ENCODE measurements at regions of chr17 and their contacts with region 1.

Region 1: GRCh38 chr17:61325382-61326073 is 74.1 kb upstream of the TBX2 start:
- DNase-seq: no peak
- H3K4me3 ChIP-seq: no peak overlapping the region
- H3K27ac ChIP-seq: no peak overlapping the region
- H3K4me1 ChIP-seq: no peaks in the 10 kb centered on the region
- H3K27me3 ChIP-seq: peaks cover 2% of the 10 kb centered on the region
- CTCF ChIP-seq: no peak

Region 2: DNA sequence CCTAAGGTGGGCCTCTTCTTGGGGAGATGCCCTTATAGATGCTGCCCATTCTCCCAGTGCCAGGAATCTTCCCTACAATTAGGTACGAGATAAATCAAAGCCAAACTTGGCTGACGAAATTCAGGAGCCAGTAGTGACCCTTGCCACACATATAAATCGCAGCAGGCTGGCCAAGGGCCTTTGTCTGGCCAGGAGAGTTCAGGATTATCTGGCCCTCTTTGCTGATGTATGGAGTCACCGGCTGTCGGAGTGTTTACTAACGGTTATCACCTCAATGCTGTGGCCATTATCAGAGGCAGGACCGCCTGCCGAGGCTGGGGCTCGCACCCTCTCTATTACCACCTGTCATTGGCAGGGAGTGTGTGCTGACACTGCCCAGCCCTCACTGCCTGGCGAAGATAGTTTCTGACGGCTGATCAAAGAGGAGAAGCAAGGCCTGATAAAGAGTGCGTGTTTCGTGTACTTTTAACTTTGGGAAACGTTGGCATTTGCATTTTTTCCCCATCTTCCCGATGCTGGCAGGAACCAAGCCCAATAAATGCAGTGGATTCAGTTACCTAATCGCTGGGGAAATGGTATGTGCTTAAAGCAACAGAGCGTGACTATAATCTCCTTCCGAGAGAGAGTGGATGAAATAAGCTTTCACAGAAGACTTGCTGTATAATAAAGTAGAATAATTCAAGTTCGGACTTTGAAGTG is 41.3 kb after region 1 on chr17:
- CTCF ChIA-PET with region 1: no interaction called
- dilution Hi-C with region 1: loop called (anchors 5 kb)
- in situ Hi-C with region 1: no loop called
- intact Hi-C with region 1: no loop called
- DNase-seq: no peak
- H3K4me3 ChIP-seq: no peak overlapping the region
- H3K27ac ChIP-seq: no peak overlapping the region
- H3K4me1 ChIP-seq: no peaks in the 10 kb centered on the region
- H3K27me3 ChIP-seq: no peaks in the 10 kb centered on the region
- CTCF ChIP-seq: no peak

Region 3: GRCh38 chr17:61379457-61380216 is 54.1 kb after region 1 on chr17:
- CTCF ChIA-PET with region 1: no interaction called
- dilution Hi-C with region 1: no loop called
- in situ Hi-C with region 1: no loop called
- intact Hi-C with region 1: no loop called
- DNase-seq: no peak
- H3K4me3 ChIP-seq: no peak overlapping the region
- H3K27ac ChIP-seq: no peak overlapping the region
- H3K4me1 ChIP-seq: no peaks in the 10 kb centered on the region
- H3K27me3 ChIP-seq: no peaks in the 10 kb centered on the region
- CTCF ChIP-seq: no peak

Region 4: GRCh38 chr17:61416540-61417363 is 91.2 kb after region 1 on chr17:
- CTCF ChIA-PET with region 1: no interaction called
- dilution Hi-C with region 1: no loop called
- in situ Hi-C with region 1: no loop called
- intact Hi-C with region 1: no loop called
- DNase-seq: peak; percentile 50
- H3K4me3 ChIP-seq: no peak overlapping the region
- H3K27ac ChIP-seq: no peak overlapping the region
- H3K4me1 ChIP-seq: peaks cover 12% of the 10 kb centered on the region
- H3K27me3 ChIP-seq: no peaks in the 10 kb centered on the region
- CTCF ChIP-seq: peak; percentile 84 to 97

Measured in mammary epithelial cell (primary cell).